AG04450 (cell line): ENCODE measurements at regions of chr15 and their contacts with region 1.

Region 1: DNA sequence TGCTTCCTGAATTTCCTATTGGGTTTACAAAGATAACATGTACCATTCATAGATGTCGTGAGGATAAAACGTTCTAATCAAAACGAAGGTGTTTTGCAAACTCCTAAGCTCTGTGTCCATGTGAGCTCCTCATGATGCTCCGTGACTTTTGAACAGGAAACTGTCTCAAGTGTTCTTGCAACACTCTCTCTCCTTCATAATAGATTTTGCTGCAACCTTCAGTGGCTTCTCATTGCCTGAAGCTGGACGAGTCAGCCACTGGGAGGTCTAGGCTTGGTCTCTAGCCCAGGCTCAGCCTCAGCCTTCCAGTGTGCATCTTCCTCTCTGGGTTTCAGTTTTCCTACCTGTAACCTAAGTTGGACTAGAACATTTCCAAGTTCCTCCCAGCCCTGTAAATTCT is 18.7 kb upstream of the BCL2A1 start:
- DNase-seq: no peak
- H3K4me3 ChIP-seq: no peak overlapping the region
- H3K27ac ChIP-seq: no peak overlapping the region
- H3K27me3 ChIP-seq: no peaks in the 10 kb centered on the region
- CTCF ChIP-seq: no peak

Region 2: GRCh38 chr15:79872358-79873017 is 117.2 kb before region 1 on chr15:
- CTCF ChIA-PET with region 1: interaction called, 12 read pairs
- POLR2A ChIA-PET with region 1: no interaction called
- DNase-seq: no peak
- H3K4me3 ChIP-seq: no peak overlapping the region
- H3K27ac ChIP-seq: no peak overlapping the region
- H3K27me3 ChIP-seq: no peaks in the 10 kb centered on the region
- CTCF ChIP-seq: no peak

Region 3: DNA sequence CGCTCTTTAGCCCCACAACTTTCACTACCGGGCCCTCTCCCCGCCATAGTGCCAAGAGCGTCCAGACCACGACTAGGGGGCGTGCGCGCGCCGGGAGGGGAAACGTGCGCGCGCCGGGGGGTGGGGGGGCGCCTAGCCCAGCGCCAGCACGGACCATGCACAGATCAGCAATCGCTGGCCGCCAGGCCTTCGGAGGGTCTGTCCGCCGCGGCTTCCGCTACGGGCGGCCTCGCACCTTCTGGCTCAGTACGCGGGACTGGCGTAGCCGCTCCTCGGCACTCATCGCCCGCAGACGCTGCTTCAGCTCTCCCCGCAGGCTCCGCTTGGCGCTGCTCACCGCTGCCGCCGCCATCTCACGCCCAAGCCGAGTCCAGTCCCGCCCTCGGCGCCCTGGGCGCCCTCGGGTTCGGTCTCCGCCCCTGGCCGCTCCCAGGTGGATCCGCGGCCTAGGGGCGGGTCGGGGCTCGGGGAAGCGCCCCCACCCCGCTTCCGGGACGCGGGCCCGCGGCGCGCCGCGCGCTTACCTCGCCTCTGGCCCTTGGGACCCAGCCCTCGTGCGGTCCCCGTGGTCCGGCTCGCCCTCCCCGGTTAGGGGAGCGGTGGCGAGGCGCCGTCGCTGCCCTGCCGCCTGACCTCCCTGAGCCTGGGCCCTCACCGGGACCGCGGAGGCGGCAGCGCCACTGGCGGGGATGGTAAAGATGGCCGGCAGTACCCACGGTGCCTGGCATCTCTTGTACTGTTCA is 92.9 kb before region 1 on chr15 and contains the start of gene MTHFS:
- CTCF ChIA-PET with region 1: interaction called, 36 read pairs
- POLR2A ChIA-PET with region 1: no interaction called
- DNase-seq: no peak
- H3K4me3 ChIP-seq: peak within 1 kb of the TSS; percentile 79
- H3K27ac ChIP-seq: no peak within 1 kb of the TSS
- H3K27me3 ChIP-seq: no peaks in the 10 kb centered on the region
- CTCF ChIP-seq: peak; percentile 56
- polyA plus RNA-seq, gene MTHFS: 19.0 and 20.0 TPM in 2 replicates

Region 4: GRCh38 chr15:79923515-79924395 is 65.9 kb before region 1 on chr15:
- CTCF ChIA-PET with region 1: interaction called, 15 read pairs
- POLR2A ChIA-PET with region 1: interaction called, 3 read pairs
- DNase-seq: peak; percentile 81
- H3K4me3 ChIP-seq: peak overlapping the region; percentile 88
- H3K27ac ChIP-seq: peak overlapping the region; percentile 90
- H3K27me3 ChIP-seq: no peaks in the 10 kb centered on the region
- CTCF ChIP-seq: no peak

Region 5: GRCh38 chr15:80010131-80010673 is 20.5 kb after region 1 on chr15:
- CTCF ChIA-PET with region 1: no interaction called
- POLR2A ChIA-PET with region 1: no interaction called
- DNase-seq: no peak
- H3K4me3 ChIP-seq: no peak overlapping the region
- H3K27ac ChIP-seq: peak overlapping the region; percentile 33
- H3K27me3 ChIP-seq: no peaks in the 10 kb centered on the region
- CTCF ChIP-seq: no peak

Region 6: GRCh38 chr15:80052597-80053300 is 63.1 kb after region 1 on chr15:
- CTCF ChIA-PET with region 1: no interaction called
- POLR2A ChIA-PET with region 1: no interaction called
- DNase-seq: no peak
- H3K4me3 ChIP-seq: no peak overlapping the region
- H3K27ac ChIP-seq: no peak overlapping the region
- H3K27me3 ChIP-seq: peaks cover 10% of the 10 kb centered on the region
- CTCF ChIP-seq: no peak

Region 7: GRCh38 chr15:80188251-80188650 is 198.6 kb after region 1 on chr15:
- CTCF ChIA-PET with region 1: no interaction called
- POLR2A ChIA-PET with region 1: no interaction called
- DNase-seq: no peak
- H3K4me3 ChIP-seq: no peak overlapping the region
- H3K27ac ChIP-seq: no peak overlapping the region
- H3K27me3 ChIP-seq: no peaks in the 10 kb centered on the region
- CTCF ChIP-seq: no peak